Right lobe of liver (tissue), 6 donors: ENCODE measurements at regions of chrX and their contacts with region 1.

Region 1: DNA sequence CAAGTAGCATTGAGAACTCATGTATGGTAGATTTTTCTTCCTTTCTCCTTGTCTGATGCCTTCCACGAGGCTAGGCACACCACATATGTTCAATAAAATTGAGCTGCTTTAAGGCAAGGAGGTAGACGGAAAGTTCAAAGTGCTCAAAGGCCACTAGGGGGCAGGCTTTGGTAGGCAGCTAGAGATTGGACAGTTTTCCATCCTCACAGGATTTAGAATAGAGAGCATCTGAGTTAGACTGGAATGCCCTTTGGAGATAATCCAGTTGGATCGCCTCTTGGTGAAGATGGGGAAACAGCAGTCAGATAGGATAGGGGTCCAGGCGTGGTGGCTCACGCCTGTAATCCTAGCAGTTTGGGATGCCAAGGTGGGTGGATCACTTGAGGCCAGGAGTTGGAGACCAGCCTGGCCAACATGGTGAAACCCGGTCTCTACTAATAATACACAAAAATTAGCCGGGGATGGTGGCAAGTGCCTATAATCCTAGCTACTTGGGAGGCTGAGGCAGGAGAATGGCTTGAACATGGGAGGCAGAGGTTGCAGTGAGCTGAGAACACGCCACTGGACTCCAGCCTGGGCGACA is 30.4 kb downstream of the ELF4 start:
- DNase-seq: peak in 1 of 3 donors; percentile 57
- ATAC-seq: peak; percentile 71 to 82 (median 74)
- H3K4me3 ChIP-seq: no peak overlapping the region
- H3K27ac ChIP-seq: no peak overlapping the region
- H3K4me1 ChIP-seq: no peaks in the 10 kb centered on the region
- H3K27me3 ChIP-seq: no peaks in the 10 kb centered on the region
- CTCF ChIP-seq: peak; percentile 70 to 83 (median 78)
- POLR2A ChIP-seq: no peak

Region 2: DNA sequence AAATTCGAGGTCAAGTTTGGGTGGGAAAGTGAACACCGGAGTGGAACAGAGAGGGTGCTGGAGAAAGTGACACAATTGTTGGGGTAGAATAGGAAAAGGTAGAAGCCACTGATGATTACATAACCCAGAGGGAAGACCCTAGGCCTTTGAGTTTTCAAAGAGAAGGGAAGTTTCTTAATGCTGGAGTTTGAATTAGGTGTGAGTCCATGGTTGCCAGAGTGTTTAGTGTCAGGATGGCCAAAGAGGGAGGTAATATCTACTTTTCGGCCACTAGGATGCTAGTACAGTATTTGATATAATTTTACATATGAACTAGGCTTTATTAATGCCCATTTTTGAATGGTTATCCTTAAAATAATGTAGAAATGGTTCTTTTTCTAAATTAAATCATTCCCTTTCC is 92.0 kb before region 1 on chrX:
- intact Hi-C with region 1: no loop called
- DNase-seq: no peak
- ATAC-seq: no peak
- H3K4me3 ChIP-seq: no peak overlapping the region
- H3K27ac ChIP-seq: no peak overlapping the region
- H3K4me1 ChIP-seq: no peaks in the 10 kb centered on the region
- H3K27me3 ChIP-seq: no peaks in the 10 kb centered on the region
- CTCF ChIP-seq: no peak
- POLR2A ChIP-seq: no peak

Region 3: DNA sequence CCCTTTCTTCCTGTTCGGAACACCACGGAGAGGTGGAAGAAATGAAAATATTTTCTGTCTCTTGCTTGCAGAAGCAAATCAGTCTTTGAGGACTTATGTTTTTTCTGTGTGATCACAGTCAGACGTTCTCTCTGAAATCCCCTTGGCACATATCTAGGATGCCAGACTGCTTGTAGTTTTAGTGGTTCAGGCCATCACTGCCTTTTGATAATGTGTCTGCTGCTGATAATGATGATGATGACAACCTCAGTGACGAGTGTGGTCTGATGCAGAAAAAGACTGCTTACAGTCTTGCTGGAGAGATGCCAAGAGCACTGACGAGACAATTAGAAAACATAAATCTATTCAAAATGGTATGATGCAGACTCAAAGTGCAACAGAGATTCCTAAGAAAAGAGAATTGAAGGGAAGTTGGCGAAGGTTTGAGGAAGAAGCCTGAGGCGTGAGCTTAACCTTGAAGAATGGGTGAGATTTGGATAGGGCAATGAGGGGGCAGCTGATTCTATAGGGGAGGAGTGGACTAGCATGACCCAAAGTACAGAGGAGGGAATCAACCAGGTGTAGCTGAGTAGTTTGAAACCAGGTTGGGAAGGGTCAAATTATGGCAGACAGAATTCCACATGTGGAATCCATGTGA is 99.8 kb after region 1 on chrX:
- intact Hi-C with region 1: loop called in 1 of 2 experiments (anchors 10 kb)
- DNase-seq: no peak
- ATAC-seq: no peak
- H3K4me3 ChIP-seq: no peak overlapping the region
- H3K27ac ChIP-seq: no peak overlapping the region
- H3K4me1 ChIP-seq: no peaks in the 10 kb centered on the region
- H3K27me3 ChIP-seq: no peaks in the 10 kb centered on the region
- CTCF ChIP-seq: no peak
- POLR2A ChIP-seq: no peak

Region 4: DNA sequence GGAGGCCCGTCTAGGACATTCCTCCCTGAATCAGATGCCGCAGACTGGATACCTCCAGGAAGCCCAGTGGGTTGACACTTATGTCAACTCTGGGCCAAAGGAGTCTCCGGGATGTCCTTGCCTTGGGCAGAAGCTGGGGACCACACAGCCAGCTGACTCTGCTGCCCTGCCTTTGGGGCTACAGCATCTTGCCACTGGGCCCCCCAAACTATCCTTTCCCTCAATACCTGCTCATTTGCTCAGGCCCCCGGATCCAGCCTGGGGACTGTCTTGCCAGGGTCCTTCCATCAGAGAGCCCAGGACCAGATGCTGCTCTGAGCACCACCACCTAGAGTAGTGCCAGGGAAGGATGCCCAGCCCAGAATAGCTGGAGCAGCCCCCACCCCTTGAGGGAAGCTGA is 110.9 kb after region 1 on chrX:
- intact Hi-C with region 1: loop called (anchors 5 to 10 kb)
- DNase-seq: no peak
- ATAC-seq: no peak
- H3K4me3 ChIP-seq: no peak overlapping the region
- H3K27ac ChIP-seq: no peak overlapping the region
- H3K4me1 ChIP-seq: no peaks in the 10 kb centered on the region
- H3K27me3 ChIP-seq: no peaks in the 10 kb centered on the region
- CTCF ChIP-seq: no peak
- POLR2A ChIP-seq: no peak